IMR-90 (cell line): ENCODE measurements at regions of chr5 and their contacts with region 1.

Region 1: GRCh38 chr5:40984884-40985283 is 75.6 kb downstream of the C7 start:
- DNase-seq: peak; percentile 95
- ATAC-seq: peak; percentile 92
- H3K4me3 ChIP-seq: no peak overlapping the region
- H3K27ac ChIP-seq: peak overlapping the region; percentile 35
- H3K4me1 ChIP-seq: peaks cover 20% of the 10 kb centered on the region
- H3K27me3 ChIP-seq: no peaks in the 10 kb centered on the region
- CTCF ChIP-seq: no peak
- POLR2A ChIP-seq: no peak
- RAD21 ChIP-seq: no peak

Region 2: GRCh38 chr5:41252036-41252435 is 267.2 kb after region 1 on chr5:
- CTCF ChIA-PET with region 1: no interaction called
- POLR2A ChIA-PET with region 1: no interaction called
- dilution Hi-C with region 1: no loop called
- in situ Hi-C with region 1: no loop called
- intact Hi-C with region 1: loop called (anchors 10 kb)
- DNase-seq: peak; percentile 66
- ATAC-seq: peak; percentile 90
- H3K4me3 ChIP-seq: no peak overlapping the region
- H3K27ac ChIP-seq: peak overlapping the region; percentile 87; the same call in 1 of the 2 replicates
- H3K4me1 ChIP-seq: peaks cover 10% of the 10 kb centered on the region; the same call in 1 of the 2 replicates
- H3K27me3 ChIP-seq: no peaks in the 10 kb centered on the region
- CTCF ChIP-seq: no peak
- POLR2A ChIP-seq: no peak
- RAD21 ChIP-seq: no peak

Region 3: GRCh38 chr5:41305056-41305455 is 320.2 kb after region 1 on chr5:
- CTCF ChIA-PET with region 1: no interaction called
- POLR2A ChIA-PET with region 1: no interaction called
- dilution Hi-C with region 1: no loop called
- in situ Hi-C with region 1: no loop called
- intact Hi-C with region 1: no loop called
- DNase-seq: no peak
- ATAC-seq: no peak
- H3K4me3 ChIP-seq: no peak overlapping the region
- H3K27ac ChIP-seq: no peak overlapping the region
- H3K4me1 ChIP-seq: no peaks in the 10 kb centered on the region
- H3K27me3 ChIP-seq: no peaks in the 10 kb centered on the region; the same call in 1 of the 2 replicates
- CTCF ChIP-seq: no peak
- POLR2A ChIP-seq: no peak
- RAD21 ChIP-seq: no peak